ENCODE measurements at regions of chr2 and their contacts with region 1.

Region 1: DNA sequence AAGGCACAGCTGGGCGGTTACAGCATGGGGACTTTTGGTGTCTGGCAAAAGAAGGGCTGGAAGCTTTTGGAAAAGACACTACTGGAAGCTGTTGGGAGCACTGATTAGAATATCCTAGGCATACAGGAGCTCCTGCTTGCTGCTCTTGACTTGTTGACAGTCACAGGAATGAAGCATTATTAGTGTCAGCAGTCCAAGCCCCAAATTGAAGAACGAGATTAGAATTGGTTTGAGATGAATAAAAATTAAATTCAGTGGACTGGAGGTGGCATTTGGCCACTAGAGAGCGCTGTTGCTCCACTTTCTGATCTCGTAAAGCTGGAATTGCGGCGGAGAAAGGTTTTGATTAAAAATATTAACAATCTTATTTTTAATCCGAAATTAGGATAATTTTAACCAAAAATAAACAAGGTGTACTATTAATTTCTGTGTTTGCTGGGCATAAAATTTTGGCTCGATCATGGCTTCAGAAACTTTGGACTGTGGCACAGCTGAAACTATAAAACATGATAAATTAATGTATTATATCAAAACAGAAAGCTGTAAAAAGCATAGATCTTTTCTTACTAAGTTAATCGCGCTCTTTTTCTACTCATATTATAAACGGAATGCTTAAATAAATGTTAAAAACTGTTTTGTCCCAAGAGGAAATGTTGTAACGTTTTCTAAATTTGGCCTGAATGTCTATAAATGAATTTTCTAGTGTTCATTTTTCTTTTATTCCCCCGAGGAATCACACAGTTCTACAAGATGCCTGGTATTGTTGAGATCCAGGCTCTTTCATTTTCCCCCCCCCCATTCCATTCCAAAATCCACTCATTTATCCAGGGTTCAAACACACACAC is 2.4 kb upstream of the HOXD8 start:
- DNase-seq: no peak
- H3K4me3 ChIP-seq: peak overlapping the region in 1 of 8 donors; percentile 4
- H3K27ac ChIP-seq: peak overlapping the region in 4 of 8 donors; percentile 24 to 93 (median 58)
- H3K4me1 ChIP-seq: peaks cover 0 to 77% (median 48%) of the 10 kb centered on the region in 6 donors
- H3K27me3 ChIP-seq: peaks cover 8 to 100% (median 92%) of the 10 kb centered on the region in 7 donors
- CTCF ChIP-seq: peak; percentile 56 to 94 (median 80)
- POLR2A ChIP-seq: no peak

Region 2: DNA sequence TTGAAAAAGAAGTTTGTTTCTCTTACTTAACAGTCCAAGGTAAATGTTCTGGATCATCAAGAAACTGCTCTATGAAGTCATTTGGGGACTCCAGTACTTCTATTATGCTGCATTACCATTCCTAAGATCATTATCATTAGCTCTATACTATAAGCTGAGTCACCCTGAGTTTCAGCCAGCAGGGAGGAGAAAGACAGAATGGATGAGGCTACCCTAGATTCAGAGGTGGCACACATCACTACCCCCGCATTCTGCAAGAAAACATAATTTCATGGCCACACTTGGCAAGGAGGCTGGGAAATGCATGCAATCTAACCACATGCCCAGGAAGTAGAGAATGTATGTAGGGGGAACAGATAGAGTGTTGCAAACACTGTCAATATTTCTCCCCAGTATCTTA is 108.4 kb before region 1 on chr2:
- intact Hi-C with region 1: no loop called
- DNase-seq: no peak
- H3K4me3 ChIP-seq: no peak overlapping the region
- H3K27ac ChIP-seq: no peak overlapping the region
- H3K4me1 ChIP-seq: no peaks in the 10 kb centered on the region
- H3K27me3 ChIP-seq: peaks cover 0 to 44% (median 0%) of the 10 kb centered on the region in 7 donors
- CTCF ChIP-seq: no peak
- POLR2A ChIP-seq: no peak

Region 3: GRCh38 chr2:176554101-176555048 is 427.2 kb after region 1 on chr2:
- intact Hi-C with region 1: loop called (anchors 5 kb)
- DNase-seq: no peak
- H3K4me3 ChIP-seq: peak overlapping the region; percentile 30 to 68 (median 37)
- H3K27ac ChIP-seq: peak overlapping the region; percentile 4 to 83 (median 76)
- H3K4me1 ChIP-seq: peaks cover 0 to 19% (median 11%) of the 10 kb centered on the region in 6 donors
- H3K27me3 ChIP-seq: peaks cover 0 to 71% (median 7%) of the 10 kb centered on the region in 7 donors
- CTCF ChIP-seq: peak; percentile 38 to 88 (median 67)
- POLR2A ChIP-seq: no peak

Region 4: DNA sequence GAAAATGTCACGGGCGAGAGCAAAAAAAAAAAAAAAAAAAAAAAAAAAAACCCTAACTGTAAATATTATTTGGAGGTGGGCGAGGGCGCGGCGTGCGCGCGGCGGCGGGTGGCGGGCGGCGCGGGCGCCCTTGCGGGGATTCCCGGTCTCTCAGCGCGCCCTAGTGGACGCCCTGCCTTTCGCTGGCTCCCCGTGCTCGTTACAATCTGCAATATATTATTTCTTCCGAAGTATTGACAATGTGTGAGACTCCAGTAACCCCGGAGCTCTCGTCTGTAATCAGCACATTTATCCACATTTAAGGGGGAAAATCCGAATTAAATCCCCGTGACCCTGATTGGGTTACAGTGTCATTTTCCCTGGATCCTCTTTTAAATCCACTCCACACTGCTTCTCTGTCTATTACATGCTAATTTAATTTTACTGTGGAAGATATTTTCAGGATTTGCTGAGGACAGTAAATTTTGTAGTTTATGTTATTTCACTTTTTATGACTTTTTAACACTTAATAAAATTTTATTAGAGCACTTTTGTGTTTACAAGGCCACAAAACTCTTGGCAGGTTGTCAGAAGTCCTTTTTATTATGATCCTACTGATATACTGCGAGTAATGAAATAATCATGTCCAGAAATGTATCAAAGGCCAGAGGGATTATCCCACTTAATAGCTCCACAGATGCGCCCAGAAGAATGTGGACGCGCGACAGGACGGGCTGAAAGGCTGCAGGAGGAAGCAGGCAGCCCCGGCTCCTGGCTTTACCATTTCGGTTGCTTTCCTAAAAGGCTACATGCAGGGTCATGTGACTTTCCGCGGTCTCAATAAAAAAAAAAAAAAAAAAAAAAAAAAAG is 511.2 kb after region 1 on chr2:
- intact Hi-C with region 1: loop called (anchors 5 kb)
- DNase-seq: peak; percentile 88
- H3K4me3 ChIP-seq: peak overlapping the region; percentile 38 to 78 (median 59)
- H3K27ac ChIP-seq: peak overlapping the region; percentile 28 to 93 (median 86)
- H3K4me1 ChIP-seq: peaks cover 0 to 27% (median 11%) of the 10 kb centered on the region in 6 donors
- H3K27me3 ChIP-seq: peaks cover 0 to 84% (median 40%) of the 10 kb centered on the region in 7 donors
- CTCF ChIP-seq: peak in 9 of 11 experiments; percentile 11 to 75 (median 69)
- POLR2A ChIP-seq: no peak

Region 5: GRCh38 chr2:176653479-176654443 is 526.6 kb after region 1 on chr2:
- intact Hi-C with region 1: loop called (anchors 5 kb)
- DNase-seq: peak; percentile 78
- H3K4me3 ChIP-seq: no peak overlapping the region
- H3K27ac ChIP-seq: peak overlapping the region in 5 of 8 donors; percentile 13 to 50 (median 19)
- H3K4me1 ChIP-seq: peaks cover 0 to 22% (median 14%) of the 10 kb centered on the region in 6 donors
- H3K27me3 ChIP-seq: peaks cover 0 to 25% (median 0%) of the 10 kb centered on the region in 7 donors
- CTCF ChIP-seq: peak; percentile 29 to 78 (median 69)
- POLR2A ChIP-seq: no peak

Region 6: DNA sequence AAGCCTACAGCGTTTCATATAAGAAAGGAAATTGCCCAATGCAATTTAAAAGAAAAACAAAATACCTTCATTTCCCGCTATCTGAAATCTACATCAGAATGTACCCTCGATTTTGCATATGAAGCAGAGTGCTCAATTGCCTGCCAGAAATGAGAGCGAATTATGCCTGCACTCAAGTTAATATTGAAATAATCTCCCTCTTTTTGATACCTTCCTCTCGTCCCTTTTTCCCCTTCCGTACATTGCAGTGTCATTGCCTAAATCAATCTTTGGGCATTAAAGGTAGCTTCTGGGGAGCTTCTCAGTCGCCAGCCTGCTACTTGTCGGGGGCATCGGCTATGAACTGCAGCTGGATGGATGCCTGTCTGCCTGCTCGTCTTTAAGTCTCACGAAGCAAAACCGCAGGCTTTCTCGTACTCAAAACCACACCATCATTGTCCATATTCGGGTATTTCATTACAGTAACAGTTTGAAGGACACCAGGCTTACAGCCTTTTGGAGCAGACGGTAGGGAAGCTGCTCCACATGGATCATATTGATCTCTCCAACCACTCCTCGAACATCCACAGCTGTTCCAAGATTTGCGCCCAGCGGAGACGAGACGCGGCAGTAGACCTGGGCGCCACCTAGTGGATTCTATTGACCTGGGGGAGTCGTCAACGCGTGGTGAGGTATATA is 1021.5 kb after region 1 on chr2:
- intact Hi-C with region 1: loop called (anchors 5 kb)
- DNase-seq: peak; percentile 89
- H3K4me3 ChIP-seq: peak overlapping the region; percentile 22 to 73 (median 38)
- H3K27ac ChIP-seq: no peak overlapping the region
- H3K4me1 ChIP-seq: peaks cover 7 to 25% (median 12%) of the 10 kb centered on the region in 6 donors
- H3K27me3 ChIP-seq: peaks cover 0 to 23% (median 6%) of the 10 kb centered on the region in 7 donors
- CTCF ChIP-seq: peak; percentile 58 to 83 (median 72)
- POLR2A ChIP-seq: no peak

Measured in spleen (tissue), 13 donors.